ENCODE measurements at regions of chr9 and their contacts with region 1.

Region 1: GRCh38 chr9:37994639-37995347 is 74.2 kb downstream of the SHB start:
- DNase-seq: peak; percentile 66
- ATAC-seq: peak; percentile 88
- H3K4me3 ChIP-seq: no peak overlapping the region
- H3K27ac ChIP-seq: peak overlapping the region; percentile 67
- H3K4me1 ChIP-seq: peaks cover 50% of the 10 kb centered on the region
- H3K27me3 ChIP-seq: no peaks in the 10 kb centered on the region
- CTCF ChIP-seq: no peak
- EP300 ChIP-seq: peak; percentile 91 to 92
- POLR2A ChIP-seq: no peak
- RAD21 ChIP-seq: no peak

Region 2: DNA sequence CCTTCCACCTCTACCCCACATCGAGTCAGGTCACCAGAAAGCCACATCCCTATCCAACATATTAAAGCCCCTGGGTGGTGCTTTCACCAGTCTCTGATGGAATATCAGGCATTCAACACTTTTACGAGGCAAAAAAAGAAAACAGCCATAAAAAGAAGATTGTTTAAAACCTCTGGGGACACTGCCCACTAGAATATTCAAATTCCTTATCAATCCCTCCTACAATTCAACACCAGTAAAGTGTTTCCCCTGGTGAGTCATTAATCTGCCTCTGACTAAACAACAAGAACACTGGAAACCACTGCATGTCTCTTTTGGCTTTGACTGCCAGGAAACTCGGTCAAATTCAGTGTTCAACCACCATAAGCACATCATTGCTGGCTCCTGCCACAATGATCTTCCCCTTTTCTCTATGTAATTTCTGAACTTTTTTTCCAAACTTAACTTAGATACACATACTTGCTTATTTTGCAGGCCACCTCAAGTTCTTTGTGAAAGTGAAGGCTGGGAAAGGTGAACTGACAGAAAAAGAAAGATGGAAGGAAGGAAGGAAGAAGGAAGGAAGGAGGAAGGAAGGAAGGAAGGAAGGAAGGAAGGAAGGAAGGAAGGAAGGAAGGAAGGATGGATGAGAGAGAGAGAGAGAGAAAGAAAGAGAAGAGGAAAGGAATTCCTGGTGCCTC is 1066.0 kb before region 1 on chr9:
- CTCF ChIA-PET with region 1: no interaction called
- POLR2A ChIA-PET with region 1: no interaction called
- RAD21 ChIA-PET with region 1: no interaction called
- SMC1A ChIA-PET with region 1: no interaction called
- in situ Hi-C with region 1: loop called (anchors 25 kb)
- intact Hi-C with region 1: no loop called
- DNase-seq: peak; percentile 64
- ATAC-seq: peak; percentile 77
- H3K4me3 ChIP-seq: no peak overlapping the region
- H3K27ac ChIP-seq: peak overlapping the region; percentile 55
- H3K4me1 ChIP-seq: peaks cover 25% of the 10 kb centered on the region
- H3K27me3 ChIP-seq: no peaks in the 10 kb centered on the region
- CTCF ChIP-seq: no peak
- EP300 ChIP-seq: no peak
- POLR2A ChIP-seq: no peak
- RAD21 ChIP-seq: no peak

Region 3: DNA sequence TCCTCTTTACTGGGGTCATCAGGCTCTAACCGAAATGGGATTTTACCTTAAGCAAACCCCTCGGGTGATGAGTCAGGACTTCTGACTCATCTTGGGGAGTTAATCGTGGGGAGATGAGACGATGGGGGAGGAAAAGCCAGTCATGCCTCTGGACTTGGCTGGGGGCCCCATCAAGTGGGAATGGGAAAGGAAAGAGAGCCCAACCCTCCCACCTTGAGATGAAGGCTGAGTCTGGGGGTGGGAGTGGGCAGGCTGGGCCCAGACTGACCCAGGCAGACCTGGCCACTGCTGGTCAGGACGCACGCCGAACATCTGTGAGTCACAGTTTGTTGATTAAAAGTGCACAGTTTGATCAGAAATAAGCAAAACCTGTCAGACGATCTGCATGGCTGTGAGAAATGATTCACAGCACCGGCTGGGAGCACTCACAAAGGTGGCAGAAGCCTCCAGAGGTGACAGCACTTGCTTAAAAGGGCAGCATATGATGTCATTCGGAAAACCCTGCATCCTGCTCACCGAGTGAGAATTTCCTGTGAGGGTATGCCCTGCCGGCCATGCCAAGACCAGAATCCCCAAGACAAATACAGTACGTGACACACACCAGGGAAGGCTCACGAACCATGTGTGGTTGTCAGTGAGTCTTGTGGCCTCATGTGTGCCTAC is 40.9 kb before region 1 on chr9:
- CTCF ChIA-PET with region 1: no interaction called
- POLR2A ChIA-PET with region 1: interaction called, 3 read pairs
- RAD21 ChIA-PET with region 1: interaction called, 9 read pairs
- SMC1A ChIA-PET with region 1: interaction called, 10 read pairs
- in situ Hi-C with region 1: no loop called
- intact Hi-C with region 1: no loop called
- DNase-seq: peak; percentile 80
- ATAC-seq: peak; percentile 88
- H3K4me3 ChIP-seq: no peak overlapping the region
- H3K27ac ChIP-seq: peak overlapping the region; percentile 71
- H3K4me1 ChIP-seq: peaks cover 30% of the 10 kb centered on the region
- H3K27me3 ChIP-seq: no peaks in the 10 kb centered on the region
- CTCF ChIP-seq: no peak
- EP300 ChIP-seq: peak; percentile 53 to 63; a peak in 3 of 4 replicates
- POLR2A ChIP-seq: no peak
- RAD21 ChIP-seq: no peak

Region 4: GRCh38 chr9:37979844-37980243 is 14.9 kb before region 1 on chr9:
- CTCF ChIA-PET with region 1: interaction called, 3 read pairs
- POLR2A ChIA-PET with region 1: no interaction called
- RAD21 ChIA-PET with region 1: interaction called, 4 read pairs
- SMC1A ChIA-PET with region 1: interaction called, 13 read pairs
- in situ Hi-C with region 1: no loop called
- intact Hi-C with region 1: no loop called
- DNase-seq: no peak
- ATAC-seq: no peak
- H3K4me3 ChIP-seq: no peak overlapping the region
- H3K27ac ChIP-seq: no peak overlapping the region
- H3K4me1 ChIP-seq: no peaks in the 10 kb centered on the region
- H3K27me3 ChIP-seq: no peaks in the 10 kb centered on the region
- CTCF ChIP-seq: no peak
- EP300 ChIP-seq: no peak
- POLR2A ChIP-seq: no peak
- RAD21 ChIP-seq: no peak

Region 5: DNA sequence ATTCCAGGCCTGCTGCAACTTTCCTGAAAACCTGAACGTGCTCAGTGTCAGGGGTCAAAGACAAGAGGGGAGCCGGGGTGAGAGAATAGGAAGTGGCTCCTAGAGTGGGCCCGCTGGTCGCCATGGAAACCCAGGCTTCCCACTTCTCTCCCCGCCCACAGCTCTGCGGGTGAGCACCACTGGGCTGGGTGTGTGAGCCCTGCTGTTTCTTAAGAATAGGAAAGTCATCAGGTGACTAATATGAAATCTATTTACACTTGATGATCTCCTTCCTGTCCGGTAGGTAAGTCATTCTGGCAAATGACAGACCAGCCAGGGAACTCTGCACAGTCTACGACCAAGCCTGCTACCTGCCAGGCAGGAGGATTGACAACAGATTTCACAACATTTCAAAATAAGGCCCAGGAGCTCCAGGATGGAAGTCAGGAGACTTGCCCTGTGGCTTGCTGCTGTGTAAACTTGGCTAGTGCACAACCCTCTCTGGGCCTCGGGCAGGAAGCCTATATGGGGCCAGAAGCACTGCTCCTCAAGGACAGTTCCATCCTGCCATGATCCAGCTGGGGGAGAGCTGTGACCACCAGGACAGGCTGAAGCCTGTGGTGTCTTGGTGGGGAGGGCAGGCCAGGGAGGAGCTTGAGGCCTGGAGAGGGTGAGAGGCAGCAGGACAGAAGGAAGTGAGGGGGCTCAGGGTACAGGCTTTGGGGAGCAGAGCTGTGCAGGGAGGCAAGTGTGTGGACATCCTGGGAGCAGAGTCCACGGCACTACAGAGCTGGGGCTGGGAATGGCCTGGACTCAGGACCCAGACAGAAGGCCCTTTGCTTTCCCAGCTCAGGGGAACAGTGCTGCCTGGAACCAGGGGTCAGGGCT is 13.6 kb after region 1 on chr9:
- CTCF ChIA-PET with region 1: interaction called, 5 read pairs
- POLR2A ChIA-PET with region 1: interaction called, 4 read pairs
- RAD21 ChIA-PET with region 1: interaction called, 15 read pairs
- SMC1A ChIA-PET with region 1: interaction called, 23 read pairs
- in situ Hi-C with region 1: no loop called
- intact Hi-C with region 1: no loop called
- DNase-seq: peak; percentile 56
- ATAC-seq: peak; percentile 91
- H3K4me3 ChIP-seq: no peak overlapping the region
- H3K27ac ChIP-seq: peak overlapping the region; percentile 58
- H3K4me1 ChIP-seq: peaks cover 17% of the 10 kb centered on the region
- H3K27me3 ChIP-seq: no peaks in the 10 kb centered on the region
- CTCF ChIP-seq: no peak
- EP300 ChIP-seq: no peak
- POLR2A ChIP-seq: no peak
- RAD21 ChIP-seq: no peak

Region 6: GRCh38 chr9:38061326-38061977 is 66.7 kb after region 1 on chr9:
- CTCF ChIA-PET with region 1: interaction called, 8 read pairs
- POLR2A ChIA-PET with region 1: interaction called, 6 read pairs
- RAD21 ChIA-PET with region 1: interaction called, 23 read pairs
- SMC1A ChIA-PET with region 1: interaction called, 5 read pairs
- in situ Hi-C with region 1: no loop called
- intact Hi-C with region 1: no loop called
- DNase-seq: peak; percentile 65
- ATAC-seq: peak; percentile 81
- H3K4me3 ChIP-seq: no peak overlapping the region
- H3K27ac ChIP-seq: no peak overlapping the region
- H3K4me1 ChIP-seq: peaks cover 42% of the 10 kb centered on the region
- H3K27me3 ChIP-seq: peaks cover 0 to 2% of the 10 kb centered on the region in 2 experiments; a peak in 2 of 4 replicates
- CTCF ChIP-seq: no peak
- EP300 ChIP-seq: peak in 1 of 2 experiments; percentile 54; a peak in 1 of 4 replicates
- POLR2A ChIP-seq: no peak
- RAD21 ChIP-seq: no peak